Common myeloid progenitor, CD34-positive (primary cell): ENCODE measurements at regions of chr2 and their contacts with region 1.

Region 1: GRCh38 chr2:98465456-98466226 is 21.0 kb downstream of the INPP4A start:
- DNase-seq: peak; percentile 91 to 95 (median 94)
- H3K4me3 ChIP-seq: peak overlapping the region in 4 of 7 experiments; percentile 8 to 48 (median 37)
- H3K27ac ChIP-seq: peak overlapping the region; percentile 20 to 74
- H3K4me1 ChIP-seq: peaks cover 27 to 69% (median 67%) of the 10 kb centered on the region in 4 experiments
- H3K27me3 ChIP-seq: no peaks in the 10 kb centered on the region

Region 2: GRCh38 chr2:98445648-98446581 is 19.7 kb before region 1 on chr2:
- CTCF ChIA-PET with region 1: interaction called, 18 read pairs
- POLR2A ChIA-PET with region 1: interaction called, 3 read pairs
- DNase-seq: no peak
- H3K4me3 ChIP-seq: peak overlapping the region in 6 of 7 experiments; percentile 74 to 85 (median 84)
- H3K27ac ChIP-seq: peak overlapping the region in 1 of 2 experiments; percentile 65
- H3K4me1 ChIP-seq: peaks cover 7 to 56% (median 28%) of the 10 kb centered on the region in 4 experiments
- H3K27me3 ChIP-seq: no peaks in the 10 kb centered on the region

Region 3: DNA sequence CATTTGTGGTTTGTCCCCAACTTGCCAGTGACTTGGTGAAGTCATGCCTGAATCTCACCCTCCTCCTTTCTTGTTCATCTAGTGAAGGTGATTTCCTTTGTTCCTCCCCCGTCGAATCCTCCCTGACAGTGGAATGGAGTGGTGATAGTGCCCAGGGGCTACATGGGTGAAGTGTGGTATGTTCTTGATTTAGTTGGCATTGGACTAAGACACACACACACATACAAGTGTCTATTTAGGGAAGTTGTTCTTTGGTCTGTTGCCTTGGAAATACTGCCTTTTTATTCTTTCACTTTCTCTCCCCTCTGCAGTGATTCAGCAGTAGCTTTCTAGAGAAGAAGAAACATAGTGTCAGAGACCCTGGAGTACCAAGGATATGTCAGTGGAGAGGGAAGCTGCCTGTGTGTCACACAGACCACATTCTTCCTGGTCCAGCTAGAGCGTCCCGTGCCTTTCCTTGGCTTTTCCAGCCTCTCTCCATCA is 10.1 kb before region 1 on chr2:
- CTCF ChIA-PET with region 1: interaction called, 13 read pairs
- POLR2A ChIA-PET with region 1: interaction called, 3 read pairs
- DNase-seq: peak; percentile 78 to 96 (median 93)
- H3K4me3 ChIP-seq: peak overlapping the region in 6 of 7 experiments; percentile 6 to 57 (median 27)
- H3K27ac ChIP-seq: peak overlapping the region; percentile 51 to 79
- H3K4me1 ChIP-seq: peaks cover 29 to 82% (median 56%) of the 10 kb centered on the region in 4 experiments
- H3K27me3 ChIP-seq: no peaks in the 10 kb centered on the region

Region 4: GRCh38 chr2:98479959-98480524 is 14.4 kb after region 1 on chr2:
- CTCF ChIA-PET with region 1: interaction called, 20 read pairs
- POLR2A ChIA-PET with region 1: no interaction called
- DNase-seq: peak in 2 of 3 donors; percentile 72 to 86
- H3K4me3 ChIP-seq: no peak overlapping the region
- H3K27ac ChIP-seq: no peak overlapping the region
- H3K4me1 ChIP-seq: peaks cover 4 to 82% (median 39%) of the 10 kb centered on the region in 4 experiments
- H3K27me3 ChIP-seq: no peaks in the 10 kb centered on the region

Region 5: GRCh38 chr2:98487806-98488651 is 22.4 kb after region 1 on chr2:
- CTCF ChIA-PET with region 1: interaction called, 10 read pairs
- POLR2A ChIA-PET with region 1: no interaction called
- DNase-seq: peak in 2 of 3 donors; percentile 65 to 66
- H3K4me3 ChIP-seq: no peak overlapping the region
- H3K27ac ChIP-seq: no peak overlapping the region
- H3K4me1 ChIP-seq: peaks cover 0 to 49% (median 8%) of the 10 kb centered on the region in 4 experiments
- H3K27me3 ChIP-seq: no peaks in the 10 kb centered on the region